Endothelial cell of umbilical vein (primary cell): ENCODE measurements at regions of chr17 and their contacts with region 1.

Region 1: GRCh38 chr17:65561394-65562205 is at the start of gene AXIN2:
- DNase-seq: peak; percentile 87
- H3K4me3 ChIP-seq: peak within 1 kb of the TSS; percentile 51 to 83 (median 71)
- H3K27ac ChIP-seq: peak within 1 kb of the TSS; percentile 73
- H3K4me1 ChIP-seq: peaks cover 12% of the 10 kb centered on the region
- H3K27me3 ChIP-seq: peaks cover 4 to 5% of the 10 kb centered on the region in 2 experiments
- CTCF ChIP-seq: peak in 1 of 2 donors; percentile 15
- POLR2A ChIP-seq: no peak
- total RNA-seq, gene AXIN2: 3.0 and 3.1 TPM in 2 replicates

Region 2: DNA sequence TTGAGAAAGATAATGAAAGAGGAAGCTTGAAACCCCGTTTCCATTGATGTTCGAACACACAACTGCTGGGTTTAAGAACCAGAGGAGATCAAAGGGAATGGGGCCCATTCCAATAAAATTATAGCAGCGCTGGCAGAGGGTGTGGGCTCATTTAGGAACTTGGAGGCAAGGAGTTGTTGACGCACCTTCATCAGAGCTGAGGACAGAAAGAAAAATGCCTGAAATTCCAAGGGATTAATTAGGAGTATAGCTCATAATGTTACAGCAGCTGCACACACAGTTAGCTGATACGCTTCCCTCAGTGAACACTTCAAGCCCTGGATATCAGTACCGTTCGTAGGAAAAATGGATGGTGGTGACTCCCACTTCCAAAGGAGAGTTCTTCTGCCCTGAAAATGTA is 127.3 kb before region 1 on chr17:
- CTCF ChIA-PET with region 1: no interaction called
- POLR2A ChIA-PET with region 1: no interaction called
- dilution Hi-C with region 1: no loop called
- intact Hi-C with region 1: no loop called
- DNase-seq: no peak
- H3K4me3 ChIP-seq: no peak overlapping the region
- H3K27ac ChIP-seq: no peak overlapping the region
- H3K4me1 ChIP-seq: no peaks in the 10 kb centered on the region
- H3K27me3 ChIP-seq: peaks cover 4 to 11% of the 10 kb centered on the region in 2 experiments
- CTCF ChIP-seq: no peak
- POLR2A ChIP-seq: no peak

Region 3: GRCh38 chr17:65604070-65604469 is 42.5 kb after region 1 on chr17:
- CTCF ChIA-PET with region 1: interaction called, 3 read pairs
- POLR2A ChIA-PET with region 1: no interaction called
- dilution Hi-C with region 1: no loop called
- intact Hi-C with region 1: loop called (anchors 5 kb)
- DNase-seq: peak; percentile 70
- H3K4me3 ChIP-seq: no peak overlapping the region
- H3K27ac ChIP-seq: peak overlapping the region; percentile 23
- H3K4me1 ChIP-seq: peaks cover 10% of the 10 kb centered on the region
- H3K27me3 ChIP-seq: no peaks in the 10 kb centered on the region
- CTCF ChIP-seq: no peak
- POLR2A ChIP-seq: no peak

Region 4: GRCh38 chr17:65742403-65743307 is 181.1 kb after region 1 on chr17:
- CTCF ChIA-PET with region 1: no interaction called
- POLR2A ChIA-PET with region 1: no interaction called
- dilution Hi-C with region 1: no loop called
- intact Hi-C with region 1: loop called (anchors 5 kb)
- DNase-seq: peak; percentile 56
- H3K4me3 ChIP-seq: no peak overlapping the region
- H3K27ac ChIP-seq: peak overlapping the region; percentile 10
- H3K4me1 ChIP-seq: peaks cover 22% of the 10 kb centered on the region
- H3K27me3 ChIP-seq: no peaks in the 10 kb centered on the region
- CTCF ChIP-seq: no peak
- POLR2A ChIP-seq: no peak

Region 5: DNA sequence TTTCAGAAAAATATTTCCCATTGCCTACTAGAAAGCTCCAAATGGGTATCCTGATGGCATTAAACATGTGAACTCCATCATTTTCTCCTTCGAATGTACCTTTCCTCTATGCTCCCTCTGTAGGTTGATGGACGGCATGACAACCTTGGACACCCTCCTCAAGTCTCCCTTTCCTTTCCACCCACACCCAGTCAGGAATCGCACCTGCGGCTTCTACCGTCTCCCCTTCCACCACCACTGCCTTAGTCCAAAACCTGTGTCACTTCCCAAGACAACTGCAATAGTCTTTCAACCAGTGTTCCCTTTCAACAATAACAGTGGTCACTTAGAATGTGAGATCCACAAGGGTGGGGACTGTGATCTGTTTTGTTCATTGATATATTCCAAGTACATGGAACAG is 233.0 kb after region 1 on chr17:
- CTCF ChIA-PET with region 1: interaction called, 6 read pairs
- POLR2A ChIA-PET with region 1: no interaction called
- dilution Hi-C with region 1: no loop called
- intact Hi-C with region 1: loop called (anchors 5 kb)
- DNase-seq: peak; percentile 35
- H3K4me3 ChIP-seq: no peak overlapping the region
- H3K27ac ChIP-seq: no peak overlapping the region
- H3K4me1 ChIP-seq: peaks cover 3% of the 10 kb centered on the region
- H3K27me3 ChIP-seq: no peaks in the 10 kb centered on the region
- CTCF ChIP-seq: peak; percentile 31 to 56
- POLR2A ChIP-seq: no peak

Region 6: DNA sequence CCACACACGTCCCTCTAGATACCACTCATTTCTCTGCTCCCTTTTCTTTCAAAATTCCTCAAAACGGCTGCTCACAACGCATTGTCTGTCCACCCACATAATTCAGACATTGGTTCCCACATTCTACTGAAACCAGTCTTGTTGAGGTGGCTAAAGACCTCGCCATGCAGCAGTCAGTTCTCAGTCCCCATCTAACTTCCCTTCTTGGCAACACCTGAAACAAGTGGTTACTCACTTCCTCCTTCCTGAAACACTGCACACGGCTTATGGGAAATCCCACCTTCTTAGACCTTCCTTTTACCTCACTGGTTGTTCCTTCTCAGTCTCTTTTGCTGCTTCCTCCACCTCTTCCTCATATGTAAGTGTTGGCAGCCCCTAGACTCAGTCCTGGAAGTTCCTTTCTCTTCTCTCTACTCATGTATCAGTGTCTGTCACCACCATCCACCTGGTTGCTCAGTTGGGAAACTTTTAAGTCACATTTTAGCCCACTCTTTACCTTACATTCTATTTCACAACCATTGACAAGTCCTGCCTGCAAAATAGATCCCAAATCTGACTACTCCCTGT is 353.3 kb after region 1 on chr17:
- CTCF ChIA-PET with region 1: no interaction called
- POLR2A ChIA-PET with region 1: no interaction called
- dilution Hi-C with region 1: no loop called
- intact Hi-C with region 1: loop called (anchors 1 kb)
- DNase-seq: peak; percentile 29
- H3K4me3 ChIP-seq: no peak overlapping the region
- H3K27ac ChIP-seq: no peak overlapping the region
- H3K4me1 ChIP-seq: peaks cover 17% of the 10 kb centered on the region
- H3K27me3 ChIP-seq: no peaks in the 10 kb centered on the region
- CTCF ChIP-seq: no peak
- POLR2A ChIP-seq: no peak

Region 7: DNA sequence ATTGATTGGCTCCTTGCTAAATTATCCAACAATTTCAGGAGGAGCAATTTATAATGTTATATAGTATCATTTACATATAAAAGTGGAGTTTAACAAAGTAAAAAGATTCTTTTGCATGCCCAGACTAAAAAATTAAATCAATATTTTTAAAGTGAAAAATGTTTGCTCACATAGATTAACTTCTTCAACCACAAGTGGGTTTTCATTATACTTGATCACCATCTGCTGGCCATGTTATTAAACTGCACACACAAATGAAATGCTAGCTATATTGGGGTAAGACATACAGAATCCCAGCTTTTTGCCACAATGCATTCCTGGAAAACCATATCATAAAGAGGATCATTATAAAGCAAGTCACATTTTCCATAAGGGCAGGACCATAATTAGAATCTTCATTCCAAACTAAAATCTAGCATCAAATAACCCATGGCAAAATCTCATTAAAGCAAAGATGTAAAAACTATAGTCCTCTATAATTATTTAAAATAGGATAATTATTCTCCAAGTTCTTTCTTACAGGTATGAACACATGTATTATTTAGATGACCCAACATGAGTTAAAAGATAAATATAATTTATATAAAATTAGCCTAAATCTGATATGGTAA is 604.0 kb after region 1 on chr17:
- CTCF ChIA-PET with region 1: interaction called, 8 read pairs
- POLR2A ChIA-PET with region 1: no interaction called
- dilution Hi-C with region 1: no loop called
- intact Hi-C with region 1: loop called (anchors 2 kb)
- DNase-seq: peak; percentile 72
- H3K4me3 ChIP-seq: no peak overlapping the region
- H3K27ac ChIP-seq: no peak overlapping the region
- H3K4me1 ChIP-seq: no peaks in the 10 kb centered on the region
- H3K27me3 ChIP-seq: no peaks in the 10 kb centered on the region
- CTCF ChIP-seq: peak; percentile 33 to 45
- POLR2A ChIP-seq: no peak